ENCODE measurements at regions of chr17 and their contacts with region 1.

Region 1: GRCh38 chr17:76219670-76220383 is 20.5 kb downstream of the RNF157 start:
- DNase-seq: no peak
- ATAC-seq: no peak
- H3K4me3 ChIP-seq: no peak overlapping the region
- H3K4me3 Mint-ChIP-seq: no peak overlapping the region
- H3K27ac ChIP-seq: no peak overlapping the region
- H3K27ac Mint-ChIP-seq: peak overlapping the region in 3 of 9 donors; percentile 36 to 67 (median 57)
- H3K4me1 ChIP-seq: peaks cover 0 to 10% of the 10 kb centered on the region in 2 donors
- H3K4me1 Mint-ChIP-seq: peaks cover 11 to 65% (median 54%) of the 10 kb centered on the region in 7 donors
- H3K27me3 ChIP-seq: no peaks in the 10 kb centered on the region
- H3K27me3 Mint-ChIP-seq: no peaks in the 10 kb centered on the region

Region 2: GRCh38 chr17:76199469-76199868 is 20.4 kb before region 1 on chr17:
- CTCF ChIA-PET with region 1: interaction called, 7 read pairs
- POLR2A ChIA-PET with region 1: interaction called, 6 read pairs
- intact Hi-C with region 1: loop called in 1 of 2 experiments (anchors 2 kb)
- DNase-seq: peak in 7 of 9 donors; percentile 66 to 88 (median 84)
- ATAC-seq: peak; percentile 99
- H3K4me3 ChIP-seq: no peak overlapping the region
- H3K4me3 Mint-ChIP-seq: peak overlapping the region; percentile 48 to 76 (median 64)
- H3K27ac ChIP-seq: peak overlapping the region; percentile 79
- H3K27ac Mint-ChIP-seq: peak overlapping the region; percentile 88 to 98 (median 95)
- H3K4me1 ChIP-seq: peaks cover 23 to 66% of the 10 kb centered on the region in 2 donors
- H3K4me1 Mint-ChIP-seq: peaks cover 42 to 90% (median 86%) of the 10 kb centered on the region in 7 donors
- H3K27me3 ChIP-seq: no peaks in the 10 kb centered on the region
- H3K27me3 Mint-ChIP-seq: no peaks in the 10 kb centered on the region

Region 3: GRCh38 chr17:76208120-76208519 is 11.7 kb before region 1 on chr17:
- CTCF ChIA-PET with region 1: interaction called, 4 read pairs
- POLR2A ChIA-PET with region 1: interaction called, 10 read pairs
- intact Hi-C with region 1: loop called in 1 of 2 experiments (anchors 2 kb)
- DNase-seq: no peak
- ATAC-seq: no peak
- H3K4me3 ChIP-seq: no peak overlapping the region
- H3K4me3 Mint-ChIP-seq: peak overlapping the region in 6 of 10 donors; percentile 2 to 48 (median 16)
- H3K27ac ChIP-seq: peak overlapping the region; percentile 32
- H3K27ac Mint-ChIP-seq: peak overlapping the region in 7 of 9 donors; percentile 3 to 76 (median 70)
- H3K4me1 ChIP-seq: peaks cover 23 to 27% of the 10 kb centered on the region in 2 donors
- H3K4me1 Mint-ChIP-seq: peaks cover 19 to 70% (median 61%) of the 10 kb centered on the region in 7 donors
- H3K27me3 ChIP-seq: no peaks in the 10 kb centered on the region
- H3K27me3 Mint-ChIP-seq: no peaks in the 10 kb centered on the region

Measured in naive thymus-derived CD4-positive, alpha-beta T cell (primary cell).